ENCODE measurements at regions of chr15 and their contacts with region 1.

Region 1: DNA sequence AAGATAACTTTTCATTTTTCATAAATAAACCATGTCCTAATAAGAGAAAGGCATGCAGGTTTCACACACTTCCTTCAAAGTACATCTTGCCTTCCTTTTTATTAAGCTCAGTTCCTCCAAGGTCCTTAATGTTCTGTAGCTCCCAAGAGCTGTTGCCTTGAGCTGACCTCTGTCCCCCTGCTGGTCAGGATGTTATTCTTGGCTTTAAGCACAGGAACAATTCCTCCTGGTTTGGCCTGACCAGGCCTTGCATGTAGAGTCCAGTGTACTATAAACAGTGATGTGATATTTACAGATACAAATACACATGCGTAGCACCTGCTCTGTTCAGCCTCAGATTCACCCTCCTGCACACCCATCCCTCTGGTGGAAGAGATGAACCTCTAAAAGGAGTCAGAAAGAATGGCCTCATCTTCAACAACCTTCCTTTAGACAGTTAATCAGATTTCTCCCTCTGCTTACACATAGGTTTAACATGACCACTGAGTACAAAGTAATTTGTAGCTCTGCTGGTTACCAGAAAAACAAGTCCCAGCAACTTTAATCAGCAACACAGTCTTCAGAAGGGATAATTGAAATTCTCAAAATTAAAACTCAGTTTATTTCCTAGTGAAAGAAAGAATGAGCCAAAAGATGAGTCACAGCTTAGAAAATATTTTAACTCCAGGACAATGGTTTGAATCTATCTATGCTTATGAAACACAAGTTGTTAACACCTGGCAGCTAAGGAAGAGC is 46.5 kb downstream of the PTPN9 start:
- H3K4me3 ChIP-seq: no peak overlapping the region
- H3K27ac ChIP-seq: no peak overlapping the region
- H3K4me1 ChIP-seq: peaks cover 8% of the 10 kb centered on the region
- CTCF ChIP-seq: peak; percentile 65

Region 2: DNA sequence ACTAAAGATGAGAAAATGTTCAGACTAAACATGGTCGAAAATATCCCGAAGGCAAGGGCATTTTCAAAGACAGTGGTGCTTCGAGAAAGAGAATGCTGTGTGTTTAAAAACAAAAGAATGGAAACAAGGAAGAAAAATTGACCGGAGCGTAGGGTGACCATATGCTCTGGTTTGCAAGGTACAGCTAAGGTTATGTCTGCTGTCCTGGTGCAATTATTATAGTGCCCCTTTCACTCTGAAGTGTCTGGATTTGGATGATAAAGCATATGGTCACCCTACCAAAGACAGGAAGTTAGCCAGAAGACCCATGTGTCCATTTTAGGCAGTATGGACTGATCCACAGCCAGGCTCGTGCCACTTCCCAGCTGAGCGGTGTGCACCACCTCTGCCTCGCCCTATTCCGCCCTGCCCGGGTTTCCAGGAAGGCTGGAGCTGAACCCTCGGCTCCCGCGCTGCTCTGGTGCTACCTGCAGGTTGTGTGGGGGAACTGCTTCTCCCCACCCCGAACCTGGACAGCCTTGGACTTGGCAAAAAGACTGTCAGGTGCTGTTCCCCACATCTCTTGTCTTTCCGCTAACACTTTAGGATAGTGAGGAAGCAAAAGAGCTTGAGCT is 224.7 kb before region 1 on chr15:
- CTCF ChIA-PET with region 1: no interaction called
- POLR2A ChIA-PET with region 1: no interaction called
- H3K4me3 ChIP-seq: no peak overlapping the region
- H3K27ac ChIP-seq: no peak overlapping the region
- H3K4me1 ChIP-seq: no peaks in the 10 kb centered on the region
- CTCF ChIP-seq: peak; percentile 89

Region 3: DNA sequence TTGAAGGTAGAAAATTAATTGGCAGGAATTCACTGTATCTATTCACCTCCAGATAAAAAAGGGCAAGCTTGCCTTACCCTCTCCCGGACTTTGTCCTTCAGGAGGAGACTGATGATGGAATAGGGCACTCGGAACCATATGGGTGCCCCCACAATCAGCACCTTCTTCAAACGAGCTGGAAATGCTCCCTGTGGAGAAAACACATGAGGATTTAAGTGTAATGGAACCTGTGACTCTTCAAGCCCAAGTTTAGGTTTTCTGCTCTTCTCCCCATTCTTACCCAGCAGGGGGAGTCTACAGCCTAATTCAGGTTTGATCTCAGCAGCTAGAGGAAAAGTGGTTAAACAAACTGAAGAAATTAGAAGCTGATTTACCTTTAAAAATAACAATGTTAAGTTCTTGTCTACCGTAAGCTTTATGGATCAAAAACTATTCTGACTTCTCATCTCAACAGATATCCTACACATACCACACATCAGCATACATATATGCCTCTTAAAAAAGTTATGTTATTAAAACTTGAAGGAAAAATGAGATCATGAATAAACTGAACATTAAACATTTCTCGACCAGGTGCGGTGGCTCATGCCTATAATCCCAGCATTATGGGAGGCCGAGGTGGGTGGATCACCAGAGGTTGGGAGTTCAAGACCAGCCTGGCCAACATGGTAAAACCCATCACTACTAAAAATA is 23.6 kb before region 1 on chr15:
- CTCF ChIA-PET with region 1: interaction called, 14 read pairs
- POLR2A ChIA-PET with region 1: no interaction called
- H3K4me3 ChIP-seq: no peak overlapping the region
- H3K27ac ChIP-seq: no peak overlapping the region
- H3K4me1 ChIP-seq: no peaks in the 10 kb centered on the region
- CTCF ChIP-seq: 0 out of 2 replicates have a peak, but pooled peaks have one; percentile 15

Region 4: GRCh38 chr15:75544359-75544758 is 11.8 kb after region 1 on chr15:
- CTCF ChIA-PET with region 1: interaction called, 12 read pairs
- POLR2A ChIA-PET with region 1: no interaction called
- H3K4me3 ChIP-seq: no peak overlapping the region
- H3K27ac ChIP-seq: no peak overlapping the region
- H3K4me1 ChIP-seq: peaks cover 21% of the 10 kb centered on the region; the same call in 1 of the 2 replicates
- CTCF ChIP-seq: no peak

Measured in HEK293 (cell line).